Transverse colon (tissue), 4 donors: ENCODE measurements at regions of chr6 and their contacts with region 1.

Region 1: GRCh38 chr6:51090343-51090742 is 271.7 kb downstream of the TFAP2B start:
- DNase-seq: no peak
- H3K4me3 ChIP-seq: no peak overlapping the region
- H3K27ac ChIP-seq: no peak overlapping the region
- H3K4me1 ChIP-seq: no peaks in the 10 kb centered on the region
- H3K27me3 ChIP-seq: no peaks in the 10 kb centered on the region
- CTCF ChIP-seq: no peak
- EP300 ChIP-seq: no peak
- POLR2A ChIP-seq: no peak

Region 2: GRCh38 chr6:51120051-51120450 is 29.7 kb after region 1 on chr6:
- in situ Hi-C with region 1: no loop called
- intact Hi-C with region 1: loop called (anchors 1 kb)
- DNase-seq: no peak
- H3K4me3 ChIP-seq: no peak overlapping the region
- H3K27ac ChIP-seq: no peak overlapping the region
- H3K4me1 ChIP-seq: peaks cover 0 to 5% (median 0%) of the 10 kb centered on the region in 4 donors
- H3K27me3 ChIP-seq: no peaks in the 10 kb centered on the region
- CTCF ChIP-seq: no peak
- EP300 ChIP-seq: no peak
- POLR2A ChIP-seq: no peak